ENCODE measurements at regions of chr10 and their contacts with region 1.

Region 1: GRCh38 chr10:110871298-110872084 is at the start of gene PDCD4:
- DNase-seq: peak; percentile 96
- ATAC-seq: peak; percentile 83
- H3K4me3 Mint-ChIP-seq: peak within 1 kb of the TSS; percentile 89
- H3K27ac Mint-ChIP-seq: peak within 1 kb of the TSS; percentile 96
- H3K4me1 Mint-ChIP-seq: peaks cover 69% of the 10 kb centered on the region
- H3K27me3 Mint-ChIP-seq: no peaks in the 10 kb centered on the region
- total RNA-seq, gene PDCD4: 97.1 to 98.4 TPM

Region 2: DNA sequence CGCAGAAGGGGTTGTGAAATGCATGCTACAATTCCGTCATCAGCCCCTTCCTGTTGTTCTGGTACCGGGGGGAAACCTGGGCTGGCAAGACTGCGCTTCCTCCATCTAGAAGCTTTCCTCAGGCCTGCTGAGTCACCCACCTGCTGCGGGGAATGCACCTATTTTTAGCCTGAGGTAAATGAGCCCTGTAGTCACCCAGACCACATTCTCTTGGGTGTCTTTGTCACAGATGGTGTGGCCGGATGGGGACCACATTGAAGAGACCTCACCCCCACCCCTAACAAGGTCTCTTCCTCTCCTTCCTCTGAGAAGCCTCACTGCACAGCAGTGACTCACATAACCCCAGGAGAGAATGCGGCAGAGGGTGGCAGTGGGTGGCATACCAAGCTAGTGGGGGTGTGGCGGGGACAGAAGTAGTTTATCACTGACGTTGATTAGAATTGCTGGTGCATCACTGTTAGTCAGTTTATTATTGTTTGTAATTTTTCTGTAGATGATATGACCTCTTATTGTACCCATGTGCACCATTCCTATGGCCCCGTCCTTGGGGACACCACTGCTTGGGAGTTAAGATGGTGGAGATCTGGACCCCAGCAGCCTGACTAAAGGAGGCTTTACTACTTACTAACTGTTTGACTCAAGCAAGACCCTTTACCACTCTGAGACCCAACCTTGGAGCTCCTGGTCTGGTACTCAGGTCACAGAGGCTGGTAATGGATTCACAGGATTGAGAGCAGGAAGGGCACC is 456.8 kb before region 1 on chr10:
- CTCF ChIA-PET with region 1: no interaction called
- POLR2A ChIA-PET with region 1: no interaction called
- DNase-seq: peak; percentile 95
- ATAC-seq: peak; percentile 97
- H3K4me3 Mint-ChIP-seq: peak overlapping the region; percentile 31
- H3K27ac Mint-ChIP-seq: peak overlapping the region; percentile 82
- H3K4me1 Mint-ChIP-seq: peaks cover 51% of the 10 kb centered on the region
- H3K27me3 Mint-ChIP-seq: peaks cover 2% of the 10 kb centered on the region

Region 3: GRCh38 chr10:110834629-110835301 is 36.7 kb before region 1 on chr10:
- CTCF ChIA-PET with region 1: interaction called, 4 read pairs
- POLR2A ChIA-PET with region 1: interaction called, 24 read pairs
- DNase-seq: peak; percentile 58
- ATAC-seq: peak; percentile 73
- H3K4me3 Mint-ChIP-seq: no peak overlapping the region
- H3K27ac Mint-ChIP-seq: peak overlapping the region; percentile 81
- H3K4me1 Mint-ChIP-seq: peaks cover 32% of the 10 kb centered on the region
- H3K27me3 Mint-ChIP-seq: no peaks in the 10 kb centered on the region

Region 4: GRCh38 chr10:110843031-110843430 is 28.5 kb before region 1 on chr10:
- CTCF ChIA-PET with region 1: interaction called, 4 read pairs
- POLR2A ChIA-PET with region 1: interaction called, 24 read pairs
- DNase-seq: peak; percentile 69
- ATAC-seq: peak; percentile 88
- H3K4me3 Mint-ChIP-seq: peak overlapping the region; percentile 12
- H3K27ac Mint-ChIP-seq: peak overlapping the region; percentile 60
- H3K4me1 Mint-ChIP-seq: peaks cover 50% of the 10 kb centered on the region
- H3K27me3 Mint-ChIP-seq: no peaks in the 10 kb centered on the region

Region 5: DNA sequence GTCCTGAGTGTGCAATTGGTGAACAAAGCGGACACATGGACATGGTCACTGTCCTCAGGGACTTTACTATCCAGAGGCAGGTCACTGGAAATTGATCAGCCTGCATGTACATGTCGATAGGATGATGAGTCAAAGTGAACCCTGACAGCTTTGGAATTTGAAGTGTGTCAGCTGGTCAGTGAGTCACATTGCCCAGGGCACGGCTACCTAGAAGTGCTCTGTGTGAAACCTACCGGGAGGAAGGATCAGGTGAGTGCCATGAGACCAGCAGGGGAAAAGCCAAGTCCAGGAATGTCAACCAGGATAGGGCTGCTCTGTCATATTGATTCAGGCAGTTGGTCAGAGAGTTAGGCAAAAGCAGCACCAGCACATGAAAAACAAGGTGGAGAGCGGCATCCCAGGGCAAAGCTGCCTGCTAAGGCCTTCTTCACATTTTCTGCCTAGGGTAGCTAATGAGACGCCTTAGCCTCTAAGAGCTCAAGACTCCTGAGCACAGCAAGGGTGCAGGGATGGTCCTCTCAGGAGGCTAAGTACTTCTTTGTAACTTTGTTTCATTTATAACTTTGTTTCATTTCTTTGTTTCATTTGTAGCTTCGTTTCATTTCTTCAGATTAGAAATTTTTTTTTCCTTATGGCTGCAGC is 19.1 kb before region 1 on chr10:
- CTCF ChIA-PET with region 1: interaction called, 16 read pairs
- POLR2A ChIA-PET with region 1: interaction called, 20 read pairs
- DNase-seq: no peak
- ATAC-seq: peak; percentile 33
- H3K4me3 Mint-ChIP-seq: peak overlapping the region; percentile 22
- H3K27ac Mint-ChIP-seq: no peak overlapping the region
- H3K4me1 Mint-ChIP-seq: peaks cover 71% of the 10 kb centered on the region
- H3K27me3 Mint-ChIP-seq: no peaks in the 10 kb centered on the region

Region 6: GRCh38 chr10:110857265-110858158 is 14.0 kb before region 1 on chr10:
- CTCF ChIA-PET with region 1: interaction called, 16 read pairs
- POLR2A ChIA-PET with region 1: interaction called, 20 read pairs
- DNase-seq: peak; percentile 21
- ATAC-seq: no peak
- H3K4me3 Mint-ChIP-seq: peak overlapping the region; percentile 45
- H3K27ac Mint-ChIP-seq: peak overlapping the region; percentile 60
- H3K4me1 Mint-ChIP-seq: peaks cover 84% of the 10 kb centered on the region
- H3K27me3 Mint-ChIP-seq: no peaks in the 10 kb centered on the region

Measured in activated CD8-positive, alpha-beta T cell treated with anti-CD3 and anti-CD28 coated beads, Interleukin-2, amount 10 ng/mL, durations not matched to agents 7 days and 5 days (primary cell).